Mammary epithelial cell (primary cell): ENCODE measurements at regions of chr2 and their contacts with region 1.

Region 1: GRCh38 chr2:240824859-240825258 is 4.8 kb upstream of the KIF1A start:
- DNase-seq: no peak
- H3K4me3 ChIP-seq: no peak overlapping the region
- H3K27ac ChIP-seq: no peak overlapping the region
- H3K4me1 ChIP-seq: no peaks in the 10 kb centered on the region
- H3K27me3 ChIP-seq: peaks cover 23% of the 10 kb centered on the region
- CTCF ChIP-seq: no peak

Region 2: DNA sequence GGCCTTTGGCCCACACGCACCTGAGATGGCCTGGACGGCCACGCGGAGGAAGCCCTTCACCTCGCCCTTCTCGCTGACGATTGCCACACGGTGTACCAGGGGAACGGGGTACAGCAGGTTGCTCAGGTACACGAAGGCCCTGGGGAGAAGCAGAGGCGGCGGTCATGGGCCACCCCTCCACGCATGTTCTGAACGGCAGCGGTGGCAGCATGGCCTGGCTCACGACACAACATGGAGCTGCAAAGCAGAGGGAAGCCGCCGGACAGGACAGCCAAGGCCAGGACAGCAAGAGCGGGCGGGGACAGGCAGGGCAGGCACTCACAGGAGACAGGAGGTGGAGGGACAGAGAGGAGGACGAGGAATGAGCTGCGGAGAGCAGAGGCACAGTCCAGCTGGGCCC is 74.5 kb before region 1 on chr2:
- CTCF ChIA-PET with region 1: no interaction called
- dilution Hi-C with region 1: loop called (anchors 5 kb)
- in situ Hi-C with region 1: no loop called
- intact Hi-C with region 1: no loop called
- DNase-seq: no peak
- H3K4me3 ChIP-seq: no peak overlapping the region
- H3K27ac ChIP-seq: no peak overlapping the region
- H3K4me1 ChIP-seq: no peaks in the 10 kb centered on the region
- H3K27me3 ChIP-seq: peaks cover 3% of the 10 kb centered on the region
- CTCF ChIP-seq: no peak